Left ventricle myocardium superior (tissue), 1 donor: ENCODE measurements at regions of chr5 and their contacts with region 1.

Region 1: DNA sequence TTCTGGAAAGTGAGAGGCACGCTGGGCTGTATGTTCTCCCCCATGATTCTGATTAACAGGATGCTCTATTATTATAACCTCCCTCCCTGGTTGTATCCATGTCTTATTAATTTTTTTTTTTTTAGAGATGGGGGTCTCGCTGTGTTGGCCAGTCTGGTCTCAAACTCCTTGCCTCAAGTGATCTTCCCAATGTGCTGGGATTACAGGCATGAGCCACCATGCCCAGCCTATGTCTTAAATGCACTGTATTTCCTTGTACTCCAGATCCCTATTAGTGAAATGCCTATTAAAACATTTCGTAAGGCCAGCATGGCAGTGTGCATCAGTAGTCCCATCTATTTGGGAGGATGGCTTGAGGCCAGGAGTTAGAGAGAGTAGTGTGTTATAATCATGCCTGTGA is 7.0 kb downstream of the TIGD6 start:
- DNase-seq: no peak
- ATAC-seq: no peak

Region 2: DNA sequence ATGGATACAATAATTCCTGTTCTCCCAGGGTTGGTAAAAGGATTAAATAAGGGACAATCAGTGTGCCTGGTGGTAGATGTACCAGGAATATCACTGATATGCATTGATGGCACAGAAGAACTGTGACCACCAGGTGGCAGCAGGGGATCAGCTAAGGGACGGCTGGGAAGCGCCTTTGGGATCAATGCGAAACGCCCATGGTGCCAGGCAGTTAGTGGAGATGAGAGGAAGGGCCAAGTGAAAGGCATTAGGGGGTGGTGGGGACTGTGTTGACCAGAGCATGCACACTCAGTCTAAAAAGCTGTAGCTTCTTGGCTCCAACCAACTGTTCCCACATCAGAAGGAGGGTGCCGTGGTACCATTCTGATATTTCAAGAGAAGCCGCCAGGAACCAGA is 356.6 kb before region 1 on chr5:
- intact Hi-C with region 1: loop called (anchors 2 kb)
- DNase-seq: no peak
- ATAC-seq: peak; percentile 64

Region 3: DNA sequence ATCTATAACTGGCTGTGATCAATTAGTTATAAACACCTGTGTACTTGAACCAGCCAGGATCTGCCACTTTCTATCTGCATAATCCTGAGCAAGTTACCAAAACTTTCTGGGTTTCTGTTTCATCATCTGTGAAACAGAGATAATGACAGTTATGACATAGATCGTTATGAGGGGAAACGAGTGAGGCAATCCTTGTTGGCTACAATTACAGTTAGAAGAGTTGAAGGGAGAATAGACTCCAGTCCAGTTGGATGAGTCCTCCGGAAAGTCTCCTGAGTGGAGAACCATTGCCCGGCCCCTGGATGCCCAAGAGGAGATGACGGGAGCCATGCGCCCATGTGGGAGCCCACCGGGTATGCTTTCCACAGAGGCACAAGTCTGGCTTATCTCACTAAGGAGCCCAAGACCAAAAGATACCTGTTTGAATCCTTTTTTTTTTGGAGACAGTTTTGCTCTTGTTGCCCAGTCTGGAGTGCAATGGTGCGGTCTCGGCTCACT is 53.3 kb before region 1 on chr5:
- intact Hi-C with region 1: no loop called
- DNase-seq: no peak
- ATAC-seq: no peak